K562 (cell line): ENCODE measurements at regions of chr14 and their contacts with region 1.

Region 1: DNA sequence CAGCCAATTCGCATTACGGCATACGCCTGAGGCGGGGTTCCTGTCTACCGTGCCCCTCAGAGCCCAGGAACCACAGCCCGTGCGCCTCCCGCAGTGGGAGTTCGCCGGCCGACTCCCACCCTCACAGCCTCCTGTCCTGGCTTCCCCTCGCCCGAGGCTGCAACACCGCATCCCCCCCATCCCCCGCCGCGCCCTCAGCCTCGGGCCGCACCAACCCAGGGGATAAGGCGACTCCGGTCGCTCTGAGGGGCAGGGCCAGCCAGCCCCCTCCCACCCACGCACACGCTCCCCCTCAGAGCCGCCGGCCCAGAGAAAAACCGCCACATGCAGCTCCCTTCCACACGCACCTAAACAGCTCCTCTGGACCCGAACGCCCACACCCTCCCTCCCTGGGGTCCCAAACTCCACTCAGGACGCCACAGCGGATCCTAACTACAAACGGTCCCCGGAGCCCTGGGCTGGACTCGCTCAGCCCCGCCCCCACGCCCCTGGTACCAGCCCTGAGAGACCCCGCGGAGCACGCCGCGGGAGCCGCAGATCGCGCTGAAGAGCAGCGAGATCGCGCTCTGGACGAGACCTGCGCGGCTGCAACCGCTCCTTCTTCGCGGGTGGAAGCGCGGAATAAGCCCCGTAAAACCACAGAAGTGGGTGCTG is at the start of gene C14orf39:
- DNase-seq: peak; percentile 79 to 86 (median 81)
- ATAC-seq: peak; percentile 95
- H3K4me3 ChIP-seq: peak within 1 kb of the TSS; percentile 45
- H3K27ac ChIP-seq: peak within 1 kb of the TSS; percentile 87
- H3K4me1 ChIP-seq: peaks cover 0 to 7% of the 10 kb centered on the region in 2 experiments; a peak in 3 of 5 replicates
- H3K27me3 ChIP-seq: no peaks in the 10 kb centered on the region
- CTCF ChIP-seq: peak in 1 of 3 experiments; percentile 8; a peak in 1 of 6 replicates
- EP300 ChIP-seq: 0 out of 2 replicates have a peak, but pooled peaks have one; percentile 24
- POLR2A ChIP-seq: peak; percentile 73
- RAD21 ChIP-seq: no peak
- polyA plus RNA-seq, gene C14orf39: 1.2 to 1.4 TPM

Region 2: DNA sequence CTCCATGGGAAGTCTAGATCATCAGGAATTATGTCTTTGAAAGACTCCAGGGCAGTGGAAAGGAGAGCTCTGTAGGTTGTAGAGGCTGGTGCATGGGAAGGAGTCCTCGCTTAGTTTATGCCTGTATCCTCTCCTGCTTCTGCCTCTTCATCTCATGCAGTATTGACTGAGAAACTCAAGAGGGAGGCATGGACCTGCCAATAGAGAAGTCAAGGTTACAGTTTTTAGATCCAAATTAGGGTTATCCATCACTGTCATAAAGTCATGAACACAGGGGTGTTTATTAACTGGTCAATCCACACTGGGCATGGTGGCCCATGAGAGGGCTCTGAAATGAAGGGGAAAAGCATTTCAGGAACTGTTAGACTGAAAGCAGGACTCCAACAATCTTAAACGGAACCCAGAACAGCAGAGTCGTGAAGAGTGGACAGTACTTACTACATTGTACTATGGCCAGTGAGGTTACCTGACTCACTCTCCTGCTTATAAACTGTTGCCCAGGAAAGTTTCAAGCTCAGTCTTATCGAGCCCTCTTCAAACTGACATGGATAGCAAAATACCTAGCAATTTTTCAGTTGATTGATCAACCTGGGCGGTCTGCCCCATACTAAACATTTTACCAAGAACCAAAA is 290.4 kb before region 1 on chr14:
- CTCF ChIA-PET with region 1: no interaction called
- POLR2A ChIA-PET with region 1: no interaction called
- in situ Hi-C with region 1: no loop called
- intact Hi-C with region 1: loop called (anchors 5 kb)
- DNase-seq: peak in 1 of 4 experiments; percentile 16
- ATAC-seq: peak; percentile 78
- H3K4me3 ChIP-seq: no peak overlapping the region
- H3K27ac ChIP-seq: no peak overlapping the region
- H3K4me1 ChIP-seq: peaks cover 0 to 3% of the 10 kb centered on the region in 2 experiments; a peak in 2 of 5 replicates
- H3K27me3 ChIP-seq: no peaks in the 10 kb centered on the region
- CTCF ChIP-seq: peak in 2 of 3 experiments; percentile 23 to 38; a peak in 3 of 6 replicates
- EP300 ChIP-seq: no peak
- POLR2A ChIP-seq: no peak
- RAD21 ChIP-seq: peak; percentile 28 to 58

Region 3: GRCh38 chr14:60248697-60249318 is 236.9 kb before region 1 on chr14 and contains the start of gene PPM1A:
- CTCF ChIA-PET with region 1: no interaction called
- POLR2A ChIA-PET with region 1: no interaction called
- in situ Hi-C with region 1: no loop called
- intact Hi-C with region 1: loop called (anchors 10 kb)
- DNase-seq: peak; percentile 83 to 93 (median 89)
- ATAC-seq: peak; percentile 73
- H3K4me3 ChIP-seq: peak within 1 kb of the TSS; percentile 66
- H3K27ac ChIP-seq: peak within 1 kb of the TSS; percentile 99
- H3K4me1 ChIP-seq: peaks cover 10 to 25% of the 10 kb centered on the region in 2 experiments; a peak in 4 of 5 replicates
- H3K27me3 ChIP-seq: no peaks in the 10 kb centered on the region
- CTCF ChIP-seq: no peak
- EP300 ChIP-seq: no peak
- POLR2A ChIP-seq: peak; percentile 88
- RAD21 ChIP-seq: no peak
- polyA plus RNA-seq, gene PPM1A: 10.1 to 13.6 TPM

Region 4: DNA sequence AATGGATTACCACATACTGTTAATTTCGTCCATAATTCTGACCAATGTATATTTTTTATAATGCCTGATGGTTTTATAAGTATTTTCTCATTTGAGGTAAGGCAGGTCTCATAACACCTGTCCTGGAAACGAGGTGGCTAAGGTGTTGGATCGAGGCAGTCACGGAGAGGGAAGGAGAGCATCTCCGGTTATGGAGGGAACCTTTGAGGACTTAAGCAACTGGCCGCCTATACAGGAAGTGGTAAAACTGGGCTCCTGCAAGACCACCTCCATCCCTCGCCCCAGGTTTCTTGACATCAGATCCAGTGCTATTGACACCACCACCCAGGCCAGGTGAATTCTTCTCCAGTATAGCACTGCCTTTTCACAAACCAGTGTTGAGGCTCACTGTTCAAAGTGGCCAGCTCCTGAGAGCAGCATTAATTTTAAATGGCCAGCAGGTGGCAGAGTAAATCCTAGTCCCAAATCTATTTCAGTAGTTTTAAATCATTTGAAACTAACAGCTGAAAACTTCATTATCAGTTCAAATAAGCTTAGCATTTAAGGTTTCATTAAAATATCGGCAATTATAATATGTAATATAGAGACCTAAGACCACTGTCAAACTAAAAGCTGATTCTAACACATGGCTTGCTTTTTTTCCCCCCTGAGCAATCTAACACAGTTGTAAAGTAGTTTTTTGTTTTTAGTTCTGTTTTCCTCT is 135.9 kb before region 1 on chr14:
- CTCF ChIA-PET with region 1: interaction called, 4 read pairs
- POLR2A ChIA-PET with region 1: no interaction called
- in situ Hi-C with region 1: no loop called
- intact Hi-C with region 1: loop called (anchors 2 kb)
- DNase-seq: peak; percentile 26 to 61 (median 33)
- ATAC-seq: peak; percentile 86
- H3K4me3 ChIP-seq: no peak overlapping the region
- H3K27ac ChIP-seq: no peak overlapping the region
- H3K4me1 ChIP-seq: no peaks in the 10 kb centered on the region; a peak in 1 of 5 replicates
- H3K27me3 ChIP-seq: no peaks in the 10 kb centered on the region
- CTCF ChIP-seq: peak; percentile 39 to 56 (median 53); a peak in 4 of 6 replicates
- EP300 ChIP-seq: no peak
- POLR2A ChIP-seq: no peak
- RAD21 ChIP-seq: peak; percentile 51 to 61